Ascending aorta (tissue), 2 donors: ENCODE measurements at regions of chr6 and their contacts with region 1.

Region 1: DNA sequence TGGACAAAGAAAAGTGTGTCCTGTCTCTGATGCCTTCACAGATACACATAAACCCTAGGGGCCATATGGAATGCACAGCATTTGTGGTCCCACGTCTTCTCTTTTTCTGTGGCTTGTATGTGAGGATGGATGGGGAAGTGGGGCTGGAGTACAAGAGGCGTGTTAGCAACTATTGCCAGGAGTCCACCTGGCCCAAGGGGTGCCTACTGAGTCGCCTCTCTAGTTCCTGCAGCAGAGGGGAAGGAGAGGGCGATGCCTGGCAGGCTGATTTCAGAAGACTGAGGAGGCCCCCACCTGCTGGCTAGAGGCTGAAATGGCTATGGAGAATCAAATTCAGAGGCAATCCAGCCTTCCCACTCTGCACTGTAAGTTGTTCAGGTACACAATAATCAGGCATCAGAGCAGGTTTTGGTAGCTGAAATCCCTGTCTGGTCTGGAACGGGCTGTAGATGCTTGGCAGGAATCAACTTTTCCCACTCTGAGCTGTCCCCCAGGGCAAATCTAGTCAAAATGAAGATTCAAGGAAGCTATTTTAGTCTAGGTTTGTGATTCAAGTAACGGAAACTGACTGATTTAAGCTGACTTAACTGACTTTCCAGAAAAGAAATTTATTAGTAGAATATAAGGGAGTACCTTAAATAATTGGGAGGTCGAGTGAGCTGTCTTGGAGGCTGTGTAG is 14.9 kb upstream of the PPARD start:
- DNase-seq: peak in 1 of 2 donors; percentile 77
- H3K4me3 ChIP-seq: no peak overlapping the region
- H3K27ac ChIP-seq: no peak overlapping the region
- H3K4me1 ChIP-seq: no peaks in the 10 kb centered on the region
- H3K27me3 ChIP-seq: no peaks in the 10 kb centered on the region
- CTCF ChIP-seq: peak; percentile 44 to 64 (median 51)

Region 2: GRCh38 chr6:34901930-34902329 is 425.6 kb before region 1 on chr6:
- intact Hi-C with region 1: no loop called
- DNase-seq: no peak
- H3K4me3 ChIP-seq: no peak overlapping the region
- H3K27ac ChIP-seq: no peak overlapping the region
- H3K4me1 ChIP-seq: no peaks in the 10 kb centered on the region
- H3K27me3 ChIP-seq: no peaks in the 10 kb centered on the region
- CTCF ChIP-seq: no peak

Region 3: DNA sequence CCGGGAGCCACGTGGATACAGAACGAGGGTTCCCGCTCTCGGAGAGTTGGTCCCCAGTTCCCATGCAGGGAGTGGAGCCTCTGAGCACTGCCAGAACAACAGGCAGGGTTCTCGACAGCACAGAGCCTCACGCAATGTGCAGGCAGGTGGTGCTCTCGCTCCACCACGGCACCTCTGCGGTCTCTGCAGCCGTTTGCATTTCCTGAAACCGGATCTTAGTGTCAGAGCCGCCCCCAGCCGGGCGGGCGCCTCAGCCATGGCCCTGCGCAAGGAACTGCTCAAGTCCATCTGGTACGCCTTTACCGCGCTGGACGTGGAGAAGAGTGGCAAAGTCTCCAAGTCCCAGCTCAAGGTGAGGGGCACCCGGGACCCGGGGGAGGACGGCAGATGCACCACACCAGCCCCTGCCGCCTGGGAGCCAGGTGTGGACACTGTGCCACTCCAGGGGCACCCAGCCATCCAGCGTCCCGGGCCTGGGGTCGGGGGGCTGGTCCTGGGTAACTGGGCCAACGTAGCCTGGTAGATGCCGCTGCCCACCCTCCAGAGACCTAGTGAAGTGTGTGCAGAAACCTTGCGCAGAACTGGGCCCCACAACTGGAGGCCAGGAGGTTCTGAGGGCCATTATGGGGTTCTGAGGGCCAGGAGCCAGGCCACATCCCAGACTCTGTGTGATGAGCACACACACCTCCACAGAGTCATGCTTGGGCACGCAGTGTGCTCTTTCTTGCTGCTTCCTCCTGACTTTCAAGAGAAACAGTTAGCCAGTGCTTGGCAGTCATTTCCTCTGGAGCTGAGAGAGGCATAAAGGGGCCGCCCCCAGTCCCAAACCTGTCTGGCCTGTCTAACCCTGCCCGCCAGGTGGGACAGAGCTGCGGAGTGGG is 29.6 kb before region 1 on chr6 and contains the start of gene DEF6:
- intact Hi-C with region 1: loop called (anchors 5 kb)
- DNase-seq: peak; percentile 62 to 86
- H3K4me3 ChIP-seq: peak within 1 kb of the TSS; percentile 21 to 53
- H3K27ac ChIP-seq: peak within 1 kb of the TSS; percentile 7 to 15
- H3K4me1 ChIP-seq: peaks cover 0 to 3% of the 10 kb centered on the region in 2 donors
- H3K27me3 ChIP-seq: no peaks in the 10 kb centered on the region
- CTCF ChIP-seq: peak; percentile 43 to 83 (median 68)
- total RNA-seq, gene DEF6: 20.1 TPM